ENCODE measurements at regions of chr10 and their contacts with region 1.

Region 1: GRCh38 chr10:27504007-27504807 is at the start of gene RAB18:
- DNase-seq: peak; percentile 99
- H3K4me3 ChIP-seq: peak within 1 kb of the TSS; percentile 83 to 96 (median 88)
- H3K27ac ChIP-seq: peak within 1 kb of the TSS; percentile 89 to 98 (median 92)
- H3K4me1 ChIP-seq: peaks cover 0 to 47% (median 35%) of the 10 kb centered on the region in 4 donors
- H3K27me3 ChIP-seq: no peaks in the 10 kb centered on the region
- CTCF ChIP-seq: no peak
- EP300 ChIP-seq: peak in 1 of 4 donors; percentile 76
- POLR2A ChIP-seq: peak; percentile 89 to 91
- total RNA-seq, gene RAB18: 46.0 to 64.2 (median 55.1) TPM

Region 2: DNA sequence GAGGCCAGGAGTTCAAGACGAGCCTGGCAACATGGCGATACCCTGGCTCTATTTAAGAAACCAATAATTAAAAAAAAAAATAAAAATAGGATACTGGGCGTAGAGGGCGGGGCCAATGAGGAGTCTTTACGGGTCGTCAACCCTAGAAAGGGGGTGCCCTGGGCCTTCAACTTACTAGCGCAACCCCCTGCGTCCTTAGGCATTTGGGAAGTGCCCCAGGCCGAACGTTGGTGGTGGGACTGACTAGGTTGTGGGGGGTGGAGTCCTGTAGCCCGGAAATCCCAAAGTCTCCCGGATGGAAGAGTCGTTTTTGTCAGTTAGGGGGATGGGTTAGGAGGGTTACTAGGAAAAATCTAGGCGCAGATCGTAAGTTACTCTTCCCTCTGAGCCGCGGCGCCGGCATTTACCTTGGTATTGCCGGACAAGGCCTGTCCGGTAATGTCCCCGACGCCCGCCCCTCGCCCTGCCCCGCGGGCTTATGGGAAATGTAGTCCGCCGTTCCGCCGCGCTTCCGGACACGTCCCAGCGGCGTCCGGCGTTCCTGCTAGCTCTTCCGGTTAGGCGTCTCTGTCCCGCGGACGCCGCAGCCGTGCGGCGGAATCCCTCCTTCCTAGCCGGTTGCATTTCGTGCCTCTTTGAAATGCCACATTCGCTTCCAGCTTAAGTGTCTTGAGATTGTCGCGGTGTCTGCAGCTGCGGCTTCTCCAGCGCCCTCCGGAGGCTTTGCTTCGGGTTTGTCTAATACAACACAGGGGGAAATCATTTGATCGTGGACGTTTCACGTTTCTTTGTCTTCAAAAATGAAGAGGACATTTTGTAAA is 262.3 kb before region 1 on chr10:
- intact Hi-C with region 1: loop called (anchors 5 kb)
- DNase-seq: peak; percentile 96
- H3K4me3 ChIP-seq: peak overlapping the region; percentile 58 to 87 (median 79)
- H3K27ac ChIP-seq: peak overlapping the region; percentile 95 to 98 (median 96)
- H3K4me1 ChIP-seq: peaks cover 0 to 34% (median 21%) of the 10 kb centered on the region in 4 donors
- H3K27me3 ChIP-seq: no peaks in the 10 kb centered on the region
- CTCF ChIP-seq: peak; percentile 9 to 50 (median 37)
- EP300 ChIP-seq: no peak
- POLR2A ChIP-seq: peak; percentile 93 to 95

Measured in sigmoid colon (tissue), 7 donors.